A673 (cell line): ENCODE measurements at regions of chr6 and their contacts with region 1.

Region 1: GRCh38 chr6:129206821-129207220 is 323.9 kb downstream of the LAMA2 start:
- DNase-seq: peak; percentile 86
- H3K4me3 ChIP-seq: no peak overlapping the region
- H3K27ac ChIP-seq: peak overlapping the region; percentile 74
- H3K4me1 ChIP-seq: peaks cover 61% of the 10 kb centered on the region
- H3K27me3 ChIP-seq: no peaks in the 10 kb centered on the region
- CTCF ChIP-seq: no peak

Region 2: DNA sequence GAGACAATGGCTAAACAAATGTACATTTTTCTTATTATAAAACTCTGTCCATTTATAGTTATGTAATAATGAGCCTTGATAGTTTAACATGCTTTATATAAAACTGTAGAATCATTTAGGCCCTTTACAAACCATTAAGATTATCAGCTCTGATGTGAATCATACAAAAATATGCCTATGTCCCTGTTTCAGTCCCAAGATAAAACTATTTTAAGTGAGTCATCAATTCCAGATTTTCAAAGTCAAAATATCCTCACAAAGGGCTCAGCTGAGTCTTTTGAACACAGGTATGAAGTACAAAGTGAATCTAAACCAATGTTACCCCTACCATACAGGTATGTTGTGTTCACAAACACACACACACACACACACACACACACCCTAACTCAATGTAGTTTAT is 774.4 kb before region 1 on chr6:
- CTCF ChIA-PET with region 1: interaction called, 3 read pairs
- POLR2A ChIA-PET with region 1: no interaction called
- intact Hi-C with region 1: loop called (anchors 5 kb)
- DNase-seq: no peak
- H3K4me3 ChIP-seq: no peak overlapping the region
- H3K27ac ChIP-seq: peak overlapping the region; percentile 55
- H3K4me1 ChIP-seq: peaks cover 42% of the 10 kb centered on the region
- H3K27me3 ChIP-seq: no peaks in the 10 kb centered on the region
- CTCF ChIP-seq: no peak